ENCODE measurements at regions of chr5 and their contacts with region 1.

Region 1: DNA sequence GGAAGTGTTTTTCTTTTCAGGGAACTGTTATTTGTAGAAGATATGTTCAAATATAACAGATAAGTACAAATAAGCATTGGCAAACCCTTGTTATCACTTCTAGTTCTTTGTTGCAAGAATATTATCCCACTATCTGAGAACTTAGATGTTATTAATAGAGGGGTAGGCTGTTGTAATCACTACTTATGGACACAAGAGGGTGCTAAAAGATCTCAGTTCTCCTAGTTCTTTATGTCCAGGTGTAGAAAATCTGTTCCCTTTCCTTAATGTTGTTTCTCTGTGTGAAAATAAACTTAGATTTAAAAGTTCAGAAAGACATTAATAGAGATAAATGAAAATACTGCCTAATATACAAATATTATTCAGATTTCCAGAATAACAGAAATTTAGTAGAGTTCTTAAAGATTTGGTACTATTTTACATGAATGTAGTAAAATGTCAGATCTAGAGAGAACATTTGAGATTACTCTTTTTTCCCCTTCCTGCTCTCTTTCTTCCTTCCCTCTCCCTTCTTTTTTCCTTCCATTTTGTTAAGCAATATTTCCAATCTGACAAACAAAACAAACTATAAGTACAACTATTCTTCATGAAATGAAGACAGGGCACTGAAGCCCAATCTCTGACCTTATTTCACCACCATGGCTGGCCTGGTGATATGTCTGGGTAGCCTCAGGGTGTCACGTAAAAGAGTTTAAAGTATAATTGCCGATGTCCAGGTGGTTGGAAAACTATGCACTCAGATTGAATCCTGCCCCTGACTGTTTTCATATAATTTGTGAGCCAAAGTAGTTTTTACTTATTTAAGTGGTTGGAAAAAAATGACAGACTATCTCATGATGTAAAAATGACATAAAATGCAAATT is 43.6 kb upstream of the C5orf46 start:
- DNase-seq: no peak
- ATAC-seq: no peak
- H3K4me3 Mint-ChIP-seq: no peak overlapping the region
- H3K27ac Mint-ChIP-seq: no peak overlapping the region
- H3K4me1 Mint-ChIP-seq: no peaks in the 10 kb centered on the region
- H3K27me3 Mint-ChIP-seq: peaks cover 2% of the 10 kb centered on the region
- CTCF ChIP-seq: no peak

Region 2: GRCh38 chr5:148353634-148354033 is 403.7 kb after region 1 on chr5:
- CTCF ChIA-PET with region 1: no interaction called
- POLR2A ChIA-PET with region 1: no interaction called
- intact Hi-C with region 1: no loop called
- DNase-seq: no peak
- ATAC-seq: no peak
- H3K4me3 Mint-ChIP-seq: no peak overlapping the region
- H3K27ac Mint-ChIP-seq: no peak overlapping the region
- H3K4me1 Mint-ChIP-seq: no peaks in the 10 kb centered on the region
- H3K27me3 Mint-ChIP-seq: peaks cover 2% of the 10 kb centered on the region
- CTCF ChIP-seq: no peak

Region 3: DNA sequence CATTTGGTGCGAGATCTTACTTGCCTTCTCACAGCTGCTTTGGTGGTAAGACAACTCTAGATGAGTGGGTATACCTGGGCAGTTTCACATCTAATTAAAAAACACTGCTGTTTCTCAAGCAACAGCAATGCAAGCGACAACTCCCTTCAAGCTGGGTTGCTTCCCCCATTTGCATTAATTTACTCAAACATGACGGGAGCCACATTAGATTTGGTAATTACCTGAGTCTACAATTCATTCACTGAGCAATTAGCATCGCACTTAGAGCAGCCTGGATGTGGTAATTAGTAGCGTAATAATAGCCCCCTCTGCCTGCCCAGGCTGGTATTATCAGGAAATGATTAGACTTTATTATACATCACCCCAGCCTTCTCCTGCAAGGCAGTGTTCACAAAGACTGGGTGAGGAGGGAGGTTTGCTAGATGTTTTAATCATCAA is 507.3 kb after region 1 on chr5:
- CTCF ChIA-PET with region 1: no interaction called
- POLR2A ChIA-PET with region 1: no interaction called
- intact Hi-C with region 1: loop called (anchors 2 kb)
- DNase-seq: no peak
- ATAC-seq: peak; percentile 64
- H3K4me3 Mint-ChIP-seq: no peak overlapping the region
- H3K27ac Mint-ChIP-seq: no peak overlapping the region
- H3K4me1 Mint-ChIP-seq: peaks cover 2% of the 10 kb centered on the region
- H3K27me3 Mint-ChIP-seq: peaks cover 22% of the 10 kb centered on the region
- CTCF ChIP-seq: no peak

Region 4: DNA sequence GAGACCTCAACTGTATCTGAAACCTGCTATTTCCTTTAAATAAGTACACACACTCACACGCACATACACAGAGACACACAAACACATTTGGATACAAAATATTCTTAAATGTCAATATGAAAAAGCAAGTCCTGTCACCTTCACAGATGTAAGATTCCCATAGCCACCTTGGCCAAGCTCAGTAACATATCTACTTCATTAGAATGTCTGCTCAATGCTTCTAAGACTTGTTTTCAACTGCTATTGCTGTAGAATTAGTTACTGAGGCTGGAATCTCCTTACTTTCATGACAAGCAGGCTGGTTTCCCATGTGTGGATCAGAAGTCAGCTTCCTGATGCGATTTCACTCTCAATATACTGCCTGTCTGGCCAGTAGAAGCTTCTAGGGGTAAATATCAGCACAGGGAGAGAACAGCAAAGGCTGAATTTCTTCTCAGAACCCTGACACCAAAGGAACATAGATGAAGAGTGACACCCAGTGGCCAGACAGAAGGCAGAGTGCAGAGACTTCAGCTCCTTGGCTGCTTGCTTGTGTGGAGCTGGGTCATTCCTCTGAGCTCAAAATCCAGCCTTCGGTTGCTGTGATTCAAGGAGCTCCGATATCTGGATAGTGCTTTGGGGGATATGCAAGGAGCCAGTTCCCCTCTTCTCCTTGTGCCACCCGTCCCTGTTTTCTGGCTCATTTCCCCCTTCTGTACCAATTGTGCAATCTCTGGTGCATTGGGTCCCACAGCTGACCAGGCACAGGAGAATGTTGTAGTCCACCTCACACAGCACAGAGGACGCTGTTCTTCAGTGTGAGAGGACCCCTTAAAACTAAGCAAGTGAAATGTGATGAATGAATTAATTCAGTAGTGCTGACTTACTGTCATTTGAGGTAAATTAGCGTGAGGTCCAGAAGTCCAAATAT is 1164.7 kb after region 1 on chr5:
- CTCF ChIA-PET with region 1: no interaction called
- POLR2A ChIA-PET with region 1: no interaction called
- intact Hi-C with region 1: loop called (anchors 1 kb)
- DNase-seq: no peak
- ATAC-seq: peak; percentile 45
- H3K4me3 Mint-ChIP-seq: no peak overlapping the region
- H3K27ac Mint-ChIP-seq: no peak overlapping the region
- H3K4me1 Mint-ChIP-seq: no peaks in the 10 kb centered on the region
- H3K27me3 Mint-ChIP-seq: peaks cover 23% of the 10 kb centered on the region
- CTCF ChIP-seq: no peak